Activated CD8-positive, alpha-beta memory T cell treated with anti-CD3 and anti-CD28 coated beads, Interleukin-2, amount 10 ng/mL, durations not matched to agents 7 days and 5 days (primary cell): ENCODE measurements at regions of chr17 and their contacts with region 1.

Region 1: GRCh38 chr17:43946069-43946696 is 3.9 kb upstream of the PPY start:
- DNase-seq: peak; percentile 46
- ATAC-seq: no peak
- H3K4me3 Mint-ChIP-seq: no peak overlapping the region
- H3K27ac Mint-ChIP-seq: no peak overlapping the region
- H3K4me1 Mint-ChIP-seq: peaks cover 14% of the 10 kb centered on the region
- H3K27me3 Mint-ChIP-seq: peaks cover 33% of the 10 kb centered on the region

Region 2: GRCh38 chr17:43823350-43824084 is 122.7 kb before region 1 on chr17:
- CTCF ChIA-PET with region 1: no interaction called
- DNase-seq: no peak
- ATAC-seq: no peak
- H3K4me3 Mint-ChIP-seq: no peak overlapping the region
- H3K27ac Mint-ChIP-seq: no peak overlapping the region
- H3K4me1 Mint-ChIP-seq: no peaks in the 10 kb centered on the region
- H3K27me3 Mint-ChIP-seq: no peaks in the 10 kb centered on the region

Region 3: GRCh38 chr17:43907425-43907981 is 38.7 kb before region 1 on chr17 and contains the start of gene MPP2:
- CTCF ChIA-PET with region 1: interaction called, 23 read pairs
- DNase-seq: peak; percentile 46
- ATAC-seq: peak; percentile 32
- H3K4me3 Mint-ChIP-seq: no peak within 1 kb of the TSS
- H3K27ac Mint-ChIP-seq: no peak within 1 kb of the TSS
- H3K4me1 Mint-ChIP-seq: peaks cover 7% of the 10 kb centered on the region
- H3K27me3 Mint-ChIP-seq: peaks cover 59% of the 10 kb centered on the region
- total RNA-seq, gene MPP2: 0.56 to 0.61 TPM

Region 4: DNA sequence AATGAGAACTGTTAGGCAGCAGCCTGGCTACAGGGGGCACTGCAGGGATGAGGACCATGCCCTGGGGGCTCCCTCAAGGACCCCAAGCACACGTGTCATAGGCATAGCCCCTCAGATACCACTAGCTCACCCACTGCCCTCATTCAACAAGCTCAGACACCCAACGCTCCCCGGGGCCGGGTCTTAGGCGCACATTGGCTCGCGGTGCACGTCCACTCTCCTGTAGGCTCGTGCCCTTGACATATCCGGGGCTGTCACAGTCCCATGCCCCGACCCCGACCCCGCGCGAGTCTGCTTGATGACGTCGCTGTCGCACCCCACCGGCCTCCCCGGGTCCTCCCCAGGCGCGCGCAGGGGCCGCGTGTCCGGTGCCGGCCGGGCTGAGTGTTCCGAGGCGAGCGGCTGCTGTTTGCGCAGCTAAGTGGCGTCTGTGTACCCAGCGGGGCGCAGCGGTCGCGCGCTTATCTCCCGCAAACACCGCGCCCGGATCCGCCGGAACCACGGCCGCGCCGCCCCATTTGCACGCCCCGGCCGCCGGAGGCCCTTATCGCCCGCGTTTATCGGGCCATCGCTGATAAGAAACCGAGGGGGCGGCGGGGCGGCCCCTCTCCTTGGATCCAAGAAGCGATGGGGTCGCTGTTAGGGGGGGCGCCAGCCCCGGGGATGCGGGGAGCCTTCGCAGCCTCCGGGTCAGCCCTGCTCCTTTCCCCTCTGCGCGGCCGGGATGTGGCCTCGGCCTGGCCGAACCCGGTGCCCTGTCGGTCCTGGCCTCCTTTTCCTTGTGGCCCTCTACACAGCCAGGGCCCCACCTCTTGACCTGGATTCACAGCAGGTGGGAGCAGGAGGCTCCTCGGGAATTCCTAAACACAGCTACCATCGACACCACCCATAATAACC is 37.6 kb after region 1 on chr17:
- CTCF ChIA-PET with region 1: interaction called, 14 read pairs
- DNase-seq: no peak
- ATAC-seq: peak; percentile 39
- H3K4me3 Mint-ChIP-seq: no peak overlapping the region
- H3K27ac Mint-ChIP-seq: no peak overlapping the region
- H3K4me1 Mint-ChIP-seq: peaks cover 15% of the 10 kb centered on the region
- H3K27me3 Mint-ChIP-seq: peaks cover 67% of the 10 kb centered on the region

Region 5: DNA sequence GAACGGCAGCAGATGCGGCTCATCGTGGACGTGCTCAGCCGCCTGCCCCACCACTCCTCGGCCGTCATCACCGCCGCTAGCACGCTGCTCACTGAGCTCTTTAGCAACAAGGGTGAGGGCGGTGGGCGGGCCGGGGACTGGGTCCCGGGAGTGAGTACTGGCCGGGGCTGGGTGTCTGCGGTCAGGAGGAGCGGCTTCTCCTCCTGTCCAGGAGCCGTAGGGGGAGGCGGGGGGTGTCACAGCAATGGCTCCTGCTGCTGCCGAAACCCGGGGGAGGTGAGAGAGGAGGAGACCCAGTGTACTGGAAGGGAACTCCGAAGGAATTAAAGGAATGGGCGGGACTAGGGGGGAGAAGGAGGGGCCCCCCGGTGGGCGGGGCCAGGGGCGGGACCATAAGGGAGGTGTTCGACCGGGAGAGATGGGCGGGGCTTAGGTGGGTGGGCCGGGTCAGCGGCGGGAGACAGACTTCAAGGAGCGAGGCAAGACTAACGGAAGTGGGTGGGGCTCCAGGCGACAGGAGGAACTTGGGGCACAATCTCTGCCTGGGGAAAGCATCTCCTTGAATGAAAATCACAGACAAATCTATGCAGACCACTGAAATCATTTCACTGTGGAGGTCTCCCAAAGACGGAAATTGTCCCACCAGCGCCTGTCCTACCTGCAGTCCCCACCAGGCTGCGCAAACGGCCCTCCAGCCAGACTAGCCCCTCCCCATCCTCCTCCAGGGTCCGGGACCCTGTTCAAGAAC is 60.6 kb after region 1 on chr17:
- CTCF ChIA-PET with region 1: interaction called, 14 read pairs
- DNase-seq: peak; percentile 99
- ATAC-seq: peak; percentile 89
- H3K4me3 Mint-ChIP-seq: peak overlapping the region; percentile 79
- H3K27ac Mint-ChIP-seq: peak overlapping the region; percentile 7
- H3K4me1 Mint-ChIP-seq: peaks cover 26% of the 10 kb centered on the region
- H3K27me3 Mint-ChIP-seq: peaks cover 22% of the 10 kb centered on the region

Region 6: DNA sequence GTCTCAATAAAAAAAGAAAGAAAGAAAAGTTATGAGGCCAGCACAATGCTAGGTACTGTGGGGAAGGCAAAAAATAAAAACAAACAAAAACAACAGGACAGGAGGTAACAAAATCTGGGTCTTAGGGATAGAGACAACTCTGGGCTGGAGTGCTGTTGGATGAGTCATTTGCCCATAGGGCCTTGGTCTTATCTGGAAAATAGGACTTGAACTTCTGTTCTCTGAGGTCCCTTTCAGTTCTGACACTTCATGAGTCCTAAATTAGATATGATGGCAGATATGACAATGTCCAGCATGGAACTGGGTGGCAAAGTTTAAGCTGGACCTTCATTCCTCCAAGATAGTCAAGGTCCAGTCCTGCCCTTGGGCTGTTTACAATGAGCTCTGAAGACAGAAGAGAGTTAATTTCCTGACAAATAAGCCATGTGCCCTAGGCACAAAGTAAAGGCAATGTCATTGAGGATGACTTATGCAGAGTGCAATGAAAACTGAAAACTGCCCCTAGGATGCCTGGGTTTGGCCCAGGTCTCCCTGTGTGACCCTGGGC is 186.2 kb after region 1 on chr17:
- CTCF ChIA-PET with region 1: no interaction called
- DNase-seq: no peak
- ATAC-seq: no peak
- H3K4me3 Mint-ChIP-seq: no peak overlapping the region
- H3K27ac Mint-ChIP-seq: no peak overlapping the region
- H3K4me1 Mint-ChIP-seq: peaks cover 10% of the 10 kb centered on the region
- H3K27me3 Mint-ChIP-seq: peaks cover 3% of the 10 kb centered on the region

Region 7: DNA sequence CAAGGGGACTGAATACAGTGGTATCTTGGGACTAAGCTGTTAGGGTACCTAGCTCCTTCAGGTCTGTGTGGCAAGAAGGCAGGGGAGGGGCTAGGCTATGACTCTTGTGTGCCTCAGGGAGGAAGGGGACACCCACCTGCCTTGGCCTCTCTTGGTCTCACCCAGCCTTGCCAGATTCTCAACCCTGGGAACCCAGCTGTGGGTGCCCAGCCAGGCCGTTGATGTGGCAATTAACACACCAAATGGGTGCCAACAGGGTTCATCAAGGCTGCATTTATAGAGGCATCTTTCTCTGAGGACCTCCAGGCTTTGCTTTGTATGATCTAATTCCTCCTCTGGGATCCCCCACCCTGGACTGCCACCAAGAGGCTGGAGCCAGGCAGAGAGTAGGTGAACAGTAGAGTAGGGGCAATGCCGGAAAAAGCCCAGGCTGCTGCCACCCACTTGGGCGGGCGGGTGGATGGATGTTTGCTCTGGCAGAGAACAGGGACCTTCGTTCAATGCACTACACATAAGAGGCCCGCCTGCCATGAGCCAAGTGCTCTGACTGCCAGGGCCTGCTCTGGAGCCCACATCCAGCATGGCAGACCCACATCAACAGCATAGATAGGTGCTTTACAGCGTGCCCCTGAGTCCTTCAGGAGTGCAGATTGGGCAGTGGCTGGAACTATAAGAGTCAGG is 221.1 kb after region 1 on chr17:
- CTCF ChIA-PET with region 1: interaction called, 18 read pairs
- DNase-seq: no peak
- ATAC-seq: no peak
- H3K4me3 Mint-ChIP-seq: no peak overlapping the region
- H3K27ac Mint-ChIP-seq: no peak overlapping the region
- H3K4me1 Mint-ChIP-seq: no peaks in the 10 kb centered on the region
- H3K27me3 Mint-ChIP-seq: no peaks in the 10 kb centered on the region